Activated T-helper 1 cell treated with anti-CD3 and anti-CD28 coated beads, Interleukin-12 subunit alpha, Interleukin-12 subunit beta, Interleukin-2, Interleukin-4 antibody, amounts not matched to agents 30 ng/mL and 10 ng/mL and 1 ng/mL, durations not matched to agents 14 hours and 24 hours and 36 hours (primary cell): ENCODE measurements at regions of chr6 and their contacts with region 1.

Region 1: DNA sequence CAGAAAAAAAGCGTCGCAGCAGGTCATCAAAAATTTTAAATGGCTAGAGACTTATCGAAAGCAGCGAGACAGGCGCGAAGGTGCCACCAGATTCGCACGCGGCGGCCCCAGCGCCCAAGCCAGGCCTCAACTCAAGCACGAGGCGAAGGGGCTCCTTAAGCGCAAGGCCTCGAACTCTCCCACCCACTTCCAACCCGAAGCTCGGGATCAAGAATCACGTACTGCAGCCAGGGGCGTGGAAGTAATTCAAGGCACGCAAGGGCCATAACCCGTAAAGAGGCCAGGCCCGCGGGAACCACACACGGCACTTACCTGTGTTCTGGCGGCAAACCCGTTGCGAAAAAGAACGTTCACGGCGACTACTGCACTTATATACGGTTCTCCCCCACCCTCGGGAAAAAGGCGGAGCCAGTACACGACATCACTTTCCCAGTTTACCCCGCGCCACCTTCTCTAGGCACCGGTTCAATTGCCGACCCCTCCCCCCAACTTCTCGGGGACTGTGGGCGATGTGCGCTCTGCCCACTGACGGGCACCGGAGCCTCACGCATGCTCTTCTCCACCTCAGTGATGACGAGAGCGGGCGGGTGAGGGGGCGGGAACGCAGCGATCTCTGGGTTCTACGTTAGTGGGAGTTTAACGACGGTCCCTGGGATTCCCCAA is at the start of gene EEF1A1:
- DNase-seq: peak; percentile 98
- H3K4me3 Mint-ChIP-seq: peak within 1 kb of the TSS; percentile 88
- H3K27ac Mint-ChIP-seq: peak within 1 kb of the TSS; percentile 100
- H3K4me1 Mint-ChIP-seq: peaks cover 28% of the 10 kb centered on the region
- H3K27me3 Mint-ChIP-seq: peaks cover 5% of the 10 kb centered on the region
- total RNA-seq, gene EEF1A1: 8,439 and 8,694 TPM in 2 replicates

Region 2: GRCh38 chr6:73461537-73462350 is 59.1 kb before region 1 on chr6 and contains the start of gene MTO1:
- intact Hi-C with region 1: loop called (anchors 1 kb)
- DNase-seq: peak; percentile 74
- H3K4me3 Mint-ChIP-seq: peak within 1 kb of the TSS; percentile 100
- H3K27ac Mint-ChIP-seq: peak within 1 kb of the TSS; percentile 100
- H3K4me1 Mint-ChIP-seq: peaks cover 54% of the 10 kb centered on the region
- H3K27me3 Mint-ChIP-seq: no peaks in the 10 kb centered on the region
- total RNA-seq, gene MTO1: 33.3 and 45.8 TPM in 2 replicates

Region 3: GRCh38 chr6:73491377-73491776 is 29.4 kb before region 1 on chr6:
- intact Hi-C with region 1: no loop called
- DNase-seq: no peak
- H3K4me3 Mint-ChIP-seq: no peak overlapping the region
- H3K27ac Mint-ChIP-seq: no peak overlapping the region
- H3K4me1 Mint-ChIP-seq: no peaks in the 10 kb centered on the region
- H3K27me3 Mint-ChIP-seq: no peaks in the 10 kb centered on the region

Region 4: GRCh38 chr6:73585566-73586415 is 65.0 kb after region 1 on chr6:
- intact Hi-C with region 1: loop called (anchors 1 kb)
- DNase-seq: peak; percentile 29
- H3K4me3 Mint-ChIP-seq: peak overlapping the region; percentile 79
- H3K27ac Mint-ChIP-seq: peak overlapping the region; percentile 92
- H3K4me1 Mint-ChIP-seq: peaks cover 26% of the 10 kb centered on the region
- H3K27me3 Mint-ChIP-seq: no peaks in the 10 kb centered on the region

Region 5: GRCh38 chr6:73653571-73654424 is 133.0 kb after region 1 on chr6 and contains the start of gene SLC17A5:
- intact Hi-C with region 1: loop called (anchors 1 kb)
- DNase-seq: peak; percentile 84
- H3K4me3 Mint-ChIP-seq: peak within 1 kb of the TSS; percentile 95
- H3K27ac Mint-ChIP-seq: peak within 1 kb of the TSS; percentile 95
- H3K4me1 Mint-ChIP-seq: peaks cover 25% of the 10 kb centered on the region
- H3K27me3 Mint-ChIP-seq: no peaks in the 10 kb centered on the region
- total RNA-seq, gene SLC17A5: 4.5 and 5.1 TPM in 2 replicates

Region 6: DNA sequence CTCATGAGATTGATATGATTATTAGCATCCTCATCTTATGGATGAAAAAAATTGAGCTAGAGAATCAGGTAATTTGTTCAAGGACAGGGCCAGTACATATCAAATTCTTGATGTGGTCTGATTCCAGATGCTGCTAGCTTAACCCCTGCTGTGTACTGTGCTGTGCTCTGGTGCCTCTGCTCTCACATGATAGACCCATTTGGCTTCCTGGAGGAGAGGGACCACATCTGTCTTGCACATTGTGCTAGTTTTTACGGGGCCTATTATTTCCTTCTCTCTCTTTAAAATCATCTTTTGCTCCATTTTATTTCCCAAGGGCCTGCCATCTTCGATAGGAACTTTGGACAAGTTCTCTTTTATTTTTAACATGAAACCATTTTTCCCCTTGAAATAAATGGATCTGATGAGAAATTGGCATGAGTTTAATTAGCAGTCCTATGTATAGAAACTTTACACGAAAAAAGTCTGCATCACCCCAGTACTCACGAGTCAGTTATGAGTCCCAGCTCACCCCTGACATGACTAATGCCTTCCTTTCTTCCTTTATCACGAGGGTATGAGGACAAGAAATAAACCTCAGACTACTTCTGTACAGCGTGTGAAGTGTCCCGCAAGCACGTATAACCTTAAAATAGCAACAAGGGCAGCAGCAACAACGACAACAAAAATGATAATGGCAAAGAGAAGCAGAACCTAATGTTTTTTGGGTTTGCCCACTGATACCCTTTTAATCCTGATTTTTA is 201.7 kb after region 1 on chr6:
- intact Hi-C with region 1: loop called (anchors 10 kb)
- DNase-seq: peak; percentile 21
- H3K4me3 Mint-ChIP-seq: peak overlapping the region; percentile 12
- H3K27ac Mint-ChIP-seq: peak overlapping the region; percentile 84
- H3K4me1 Mint-ChIP-seq: peaks cover 43% of the 10 kb centered on the region
- H3K27me3 Mint-ChIP-seq: no peaks in the 10 kb centered on the region

Region 7: GRCh38 chr6:75284632-75285286 is 1763.9 kb after region 1 on chr6 and contains the start of gene TMEM30A:
- intact Hi-C with region 1: loop called (anchors 2 kb)
- DNase-seq: peak; percentile 97
- H3K4me3 Mint-ChIP-seq: no peak within 1 kb of the TSS
- H3K27ac Mint-ChIP-seq: no peak within 1 kb of the TSS
- H3K4me1 Mint-ChIP-seq: peaks cover 40% of the 10 kb centered on the region
- H3K27me3 Mint-ChIP-seq: no peaks in the 10 kb centered on the region
- total RNA-seq, gene TMEM30A: 66.6 and 67.2 TPM in 2 replicates